Activated CD4-positive, alpha-beta memory T cell treated with anti-CD3 and anti-CD28 coated beads for 36 hours (primary cell): ENCODE measurements at regions of chr10 and their contacts with region 1.

Region 1: DNA sequence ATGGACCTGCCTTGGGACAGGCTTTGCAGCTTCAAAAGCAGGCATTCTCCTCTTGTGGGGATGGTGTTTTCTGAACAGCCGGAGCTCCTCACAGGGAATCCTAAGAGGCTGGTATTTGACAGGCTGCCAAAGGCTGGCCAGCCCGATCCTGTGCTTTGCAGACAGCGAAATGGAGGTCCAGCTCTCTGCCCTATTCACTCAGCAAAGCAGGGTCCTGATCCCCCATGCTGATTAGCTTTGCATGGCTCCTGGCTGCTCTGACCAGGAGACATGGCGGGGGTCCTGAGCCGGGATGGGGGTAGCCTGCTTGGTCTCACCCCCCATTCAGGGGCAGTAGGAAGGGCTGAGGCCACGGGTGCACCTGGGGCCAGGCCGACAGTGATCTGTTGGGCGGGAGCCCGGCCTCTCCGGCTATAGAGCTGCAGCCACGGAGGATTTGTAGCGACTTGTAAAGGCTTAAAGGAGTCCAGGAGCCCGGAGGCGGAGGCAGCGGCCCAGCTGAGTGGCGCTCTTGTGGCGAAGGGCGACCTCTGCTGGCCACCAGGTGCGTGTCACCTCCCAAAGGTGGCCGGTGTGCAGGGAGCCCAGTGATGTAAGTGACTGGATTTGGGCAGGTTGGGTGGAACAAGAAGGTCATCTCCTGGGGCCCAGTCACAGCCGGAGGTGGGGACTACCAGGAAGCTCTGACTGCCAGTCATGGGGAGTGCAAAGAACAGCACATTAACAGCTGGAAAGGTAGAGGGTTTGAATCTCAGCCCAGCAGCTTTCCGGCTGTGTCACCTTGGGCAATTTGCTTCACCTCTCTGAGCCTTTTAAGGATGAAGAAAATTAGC is 126.5 kb downstream of the ZMIZ1 start:
- DNase-seq: peak; percentile 86
- H3K4me3 Mint-ChIP-seq: no peak overlapping the region
- H3K27ac Mint-ChIP-seq: no peak overlapping the region
- H3K4me1 Mint-ChIP-seq: no peaks in the 10 kb centered on the region
- H3K27me3 Mint-ChIP-seq: no peaks in the 10 kb centered on the region

Region 2: GRCh38 chr10:78047314-78047891 is 1147.9 kb before region 1 on chr10:
- CTCF ChIA-PET with region 1: interaction called, 64 read pairs
- POLR2A ChIA-PET with region 1: no interaction called
- intact Hi-C with region 1: loop called (anchors 1 kb)
- DNase-seq: peak; percentile 86
- H3K4me3 Mint-ChIP-seq: no peak overlapping the region
- H3K27ac Mint-ChIP-seq: no peak overlapping the region
- H3K4me1 Mint-ChIP-seq: peaks cover 28% of the 10 kb centered on the region
- H3K27me3 Mint-ChIP-seq: no peaks in the 10 kb centered on the region

Region 3: DNA sequence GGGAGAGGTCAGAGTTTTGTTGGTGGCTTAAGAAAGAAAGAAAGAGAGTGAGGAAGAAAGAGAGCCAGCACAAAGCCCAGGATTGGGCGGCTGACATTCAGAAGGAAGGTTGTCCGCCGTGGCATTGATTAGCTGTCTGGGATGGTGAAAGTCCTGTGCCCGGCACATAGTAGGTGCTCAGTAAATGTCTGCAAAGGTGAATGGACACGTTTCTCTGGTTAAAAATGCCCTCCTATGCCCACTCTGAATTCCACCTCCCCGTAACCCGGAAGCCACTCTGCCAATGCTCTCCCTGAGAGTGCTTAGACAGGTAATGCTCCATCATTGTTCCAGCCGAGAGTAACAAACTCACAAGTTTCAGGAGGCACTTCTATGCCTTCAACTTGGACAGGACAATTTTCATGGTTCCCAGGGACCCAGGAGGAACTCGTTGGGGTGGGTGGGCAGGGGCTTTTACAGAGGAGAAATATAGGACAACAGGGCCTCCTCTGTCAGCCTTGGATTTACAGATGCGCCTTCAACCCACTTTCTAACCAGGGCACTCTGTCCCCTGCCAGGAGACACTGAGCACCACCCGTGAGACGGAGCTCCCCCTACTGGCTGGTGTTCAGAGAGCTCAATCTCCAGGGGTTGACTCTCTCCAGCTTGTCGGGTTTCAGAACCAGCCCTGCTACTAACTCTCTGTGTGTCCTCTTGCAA is 538.0 kb before region 1 on chr10:
- CTCF ChIA-PET with region 1: interaction called, 18 read pairs
- POLR2A ChIA-PET with region 1: no interaction called
- intact Hi-C with region 1: no loop called
- DNase-seq: peak; percentile 81
- H3K4me3 Mint-ChIP-seq: no peak overlapping the region
- H3K27ac Mint-ChIP-seq: no peak overlapping the region
- H3K4me1 Mint-ChIP-seq: no peaks in the 10 kb centered on the region
- H3K27me3 Mint-ChIP-seq: peaks cover 8% of the 10 kb centered on the region

Region 4: GRCh38 chr10:78742730-78743615 is 452.3 kb before region 1 on chr10:
- CTCF ChIA-PET with region 1: no interaction called
- POLR2A ChIA-PET with region 1: no interaction called
- intact Hi-C with region 1: no loop called
- DNase-seq: no peak
- H3K4me3 Mint-ChIP-seq: no peak overlapping the region
- H3K27ac Mint-ChIP-seq: no peak overlapping the region
- H3K4me1 Mint-ChIP-seq: peaks cover 7% of the 10 kb centered on the region
- H3K27me3 Mint-ChIP-seq: peaks cover 3% of the 10 kb centered on the region

Region 5: DNA sequence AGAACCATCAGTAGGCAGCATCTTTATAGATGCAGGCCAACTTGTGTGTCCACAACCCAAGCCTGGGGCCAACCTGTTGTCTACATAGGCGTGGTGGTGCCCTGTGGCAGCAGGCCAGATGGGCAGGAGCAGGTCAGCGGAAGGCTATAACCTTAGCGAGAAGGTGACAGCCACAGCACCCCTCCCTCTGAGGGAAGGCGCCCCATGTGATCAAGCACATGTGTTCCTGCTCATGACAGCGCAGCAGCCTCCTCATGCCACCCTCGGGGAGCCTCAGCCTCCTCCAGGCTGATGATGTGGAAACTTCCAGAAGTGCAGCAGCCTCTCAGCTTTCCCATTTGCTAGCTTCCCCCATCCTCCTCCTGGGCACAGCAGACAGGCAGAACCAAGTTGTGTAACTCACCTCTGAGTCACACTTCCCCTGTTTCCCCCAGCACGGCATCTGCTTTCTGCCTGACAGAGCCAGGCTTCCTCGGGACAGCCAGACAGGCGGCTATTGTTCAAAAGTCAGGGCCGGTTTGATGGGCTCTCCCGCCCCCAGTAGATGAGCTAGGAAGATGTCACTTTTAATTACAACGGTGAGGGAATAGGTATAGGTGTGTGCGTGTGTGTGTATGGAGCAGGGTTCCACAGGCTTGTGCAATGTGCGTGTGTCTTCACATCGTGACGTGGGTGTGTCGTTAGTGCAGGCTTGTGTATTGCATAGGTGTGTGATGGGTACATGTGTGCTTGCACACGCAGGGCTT is 438.5 kb before region 1 on chr10:
- CTCF ChIA-PET with region 1: interaction called, 3 read pairs
- POLR2A ChIA-PET with region 1: no interaction called
- intact Hi-C with region 1: loop called (anchors 10 kb)
- DNase-seq: peak; percentile 60
- H3K4me3 Mint-ChIP-seq: no peak overlapping the region
- H3K27ac Mint-ChIP-seq: no peak overlapping the region
- H3K4me1 Mint-ChIP-seq: peaks cover 15% of the 10 kb centered on the region
- H3K27me3 Mint-ChIP-seq: peaks cover 19% of the 10 kb centered on the region

Region 6: DNA sequence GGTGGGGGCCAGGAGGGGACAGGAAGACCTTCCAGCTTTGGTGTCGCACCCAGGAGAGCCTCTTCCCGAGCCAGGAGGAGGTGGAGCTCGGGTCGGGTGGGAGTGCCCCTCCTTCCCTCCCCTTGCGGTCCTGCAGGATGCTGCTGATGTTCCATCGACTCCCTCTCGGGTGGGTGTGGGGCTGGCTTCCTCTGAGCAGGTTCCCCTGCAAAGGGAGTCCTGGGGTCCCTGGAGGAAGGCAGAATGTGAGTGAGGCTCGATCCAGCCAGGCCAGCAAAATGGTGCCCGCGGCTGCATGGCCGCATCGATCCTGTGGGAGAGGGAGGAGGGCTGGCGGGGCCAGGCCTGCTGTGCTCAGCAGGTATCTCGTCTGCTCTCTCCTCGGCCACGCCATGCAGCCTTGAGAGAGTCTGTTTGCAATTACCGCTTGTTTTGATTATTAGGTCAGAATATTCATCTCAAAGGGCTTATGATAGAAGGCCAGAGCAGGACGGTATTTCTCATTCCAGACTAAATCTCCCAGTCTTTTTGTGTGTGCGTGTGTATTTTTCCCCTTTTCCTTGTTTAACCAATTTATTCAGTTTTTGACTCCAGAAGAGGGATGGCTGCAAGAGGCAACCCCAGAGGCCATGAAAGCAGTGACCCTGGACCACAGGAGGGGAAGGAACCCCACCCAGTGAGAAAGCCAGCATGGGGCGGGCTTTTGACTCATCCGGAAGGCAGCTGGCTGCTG is 263.8 kb before region 1 on chr10:
- CTCF ChIA-PET with region 1: interaction called, 4 read pairs
- POLR2A ChIA-PET with region 1: no interaction called
- intact Hi-C with region 1: loop called (anchors 10 kb)
- DNase-seq: no peak
- H3K4me3 Mint-ChIP-seq: no peak overlapping the region
- H3K27ac Mint-ChIP-seq: no peak overlapping the region
- H3K4me1 Mint-ChIP-seq: no peaks in the 10 kb centered on the region
- H3K27me3 Mint-ChIP-seq: no peaks in the 10 kb centered on the region

Region 7: DNA sequence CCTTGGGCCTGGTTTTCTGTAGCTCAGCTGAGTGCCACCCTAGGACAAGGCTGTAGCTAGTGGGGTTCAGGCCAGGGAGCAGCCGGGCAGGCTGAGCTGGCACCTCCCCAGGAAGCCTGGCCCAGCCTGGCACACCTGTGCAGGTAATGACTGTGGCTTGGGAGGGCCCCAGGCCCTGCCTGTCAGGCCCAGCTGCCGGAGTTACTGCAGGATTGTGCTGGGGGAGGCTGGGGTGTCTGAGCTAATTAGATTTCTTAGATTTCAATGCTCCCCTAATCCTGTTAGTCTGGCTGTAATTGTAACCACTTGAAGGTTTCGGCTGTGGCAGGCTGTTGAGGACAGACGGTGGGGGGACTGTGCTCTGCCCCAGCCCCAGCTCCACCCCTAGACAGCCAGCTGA is 120.6 kb before region 1 on chr10:
- CTCF ChIA-PET with region 1: interaction called, 15 read pairs
- POLR2A ChIA-PET with region 1: no interaction called
- intact Hi-C with region 1: no loop called
- DNase-seq: no peak
- H3K4me3 Mint-ChIP-seq: no peak overlapping the region
- H3K27ac Mint-ChIP-seq: no peak overlapping the region
- H3K4me1 Mint-ChIP-seq: peaks cover 16% of the 10 kb centered on the region
- H3K27me3 Mint-ChIP-seq: no peaks in the 10 kb centered on the region